ENCODE measurements at regions of chr10 and their contacts with region 1.

Region 1: DNA sequence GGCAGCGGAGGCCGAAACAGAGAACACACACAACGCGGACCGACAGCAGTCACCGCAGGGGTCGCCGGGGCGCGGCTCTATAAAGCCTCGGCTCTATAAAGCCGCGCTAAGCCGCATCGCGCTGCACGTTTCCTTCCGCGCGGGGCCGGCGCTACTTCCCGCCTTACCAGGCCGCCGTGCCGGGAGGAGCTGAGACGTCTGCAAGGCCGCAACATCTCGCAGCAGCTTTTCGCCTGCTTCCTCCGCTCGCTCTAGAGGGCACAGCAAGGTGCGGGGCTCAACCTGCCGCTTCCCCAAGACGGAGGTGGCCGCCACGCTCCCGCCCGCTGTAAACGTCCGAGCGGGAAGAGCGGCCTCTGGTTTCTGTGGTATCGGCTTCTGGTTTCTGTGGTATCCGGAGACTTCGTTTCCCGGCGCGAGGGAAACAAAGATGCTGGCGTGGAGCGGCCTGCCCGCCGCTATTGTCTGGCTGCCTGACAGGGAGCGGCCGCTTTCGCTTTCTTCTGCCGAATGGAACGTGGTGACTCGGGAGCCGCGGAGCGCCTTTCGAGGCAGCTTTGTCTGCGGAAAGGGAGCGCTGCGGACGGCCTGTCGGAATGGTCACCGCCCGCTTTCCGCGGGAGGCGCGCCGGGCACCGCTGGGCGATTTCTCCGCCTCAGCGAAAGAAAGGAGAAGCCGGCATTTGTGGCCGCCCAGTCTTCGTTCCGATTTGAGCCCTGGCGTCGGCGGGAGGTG is 91.8 kb downstream of the SPAG6 start:
- DNase-seq: peak; percentile 89 to 90 (median 89)
- H3K4me3 ChIP-seq: peak overlapping the region; percentile 82 to 87
- H3K4me3 Mint-ChIP-seq: peak overlapping the region; percentile 92 to 97 (median 96)
- H3K27ac ChIP-seq: peak overlapping the region; percentile 90
- H3K27ac Mint-ChIP-seq: peak overlapping the region; percentile 96 to 99 (median 98)
- H3K4me1 ChIP-seq: peaks cover 15% of the 10 kb centered on the region
- H3K4me1 Mint-ChIP-seq: peaks cover 24 to 53% (median 28%) of the 10 kb centered on the region in 4 donors
- H3K27me3 ChIP-seq: no peaks in the 10 kb centered on the region
- H3K27me3 Mint-ChIP-seq: no peaks in the 10 kb centered on the region

Region 2: DNA sequence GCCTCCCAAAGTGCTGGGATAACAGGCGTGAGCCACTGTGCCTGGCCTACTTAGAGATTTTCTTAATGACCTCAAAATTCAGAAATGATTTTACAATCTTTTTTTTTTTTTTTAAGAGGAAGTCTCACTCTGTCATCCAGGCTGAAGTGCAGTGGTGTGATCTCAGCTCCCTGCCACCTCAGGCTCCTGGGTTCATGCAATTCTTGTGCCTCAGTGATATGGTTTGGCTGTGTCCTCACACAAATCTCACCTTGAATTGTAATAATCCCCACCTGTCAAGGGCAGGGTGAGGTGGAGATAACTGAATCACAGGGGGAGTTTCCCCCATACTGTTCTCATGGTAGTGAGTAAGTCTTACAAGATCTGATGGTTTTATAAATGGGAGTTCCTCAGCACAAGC is 593.4 kb before region 1 on chr10:
- CTCF ChIA-PET with region 1: no interaction called
- POLR2A ChIA-PET with region 1: no interaction called
- intact Hi-C with region 1: no loop called
- DNase-seq: no peak
- H3K4me3 ChIP-seq: no peak overlapping the region
- H3K4me3 Mint-ChIP-seq: no peak overlapping the region
- H3K27ac ChIP-seq: no peak overlapping the region
- H3K27ac Mint-ChIP-seq: peak overlapping the region in 1 of 7 donors; percentile 23
- H3K4me1 ChIP-seq: no peaks in the 10 kb centered on the region
- H3K4me1 Mint-ChIP-seq: no peaks in the 10 kb centered on the region
- H3K27me3 ChIP-seq: no peaks in the 10 kb centered on the region
- H3K27me3 Mint-ChIP-seq: no peaks in the 10 kb centered on the region

Region 3: GRCh38 chr10:21989453-21990154 is 447.4 kb before region 1 on chr10:
- CTCF ChIA-PET with region 1: interaction called, 10 read pairs
- POLR2A ChIA-PET with region 1: no interaction called
- intact Hi-C with region 1: no loop called
- DNase-seq: peak in 4 of 5 donors; percentile 13 to 33 (median 24)
- H3K4me3 ChIP-seq: no peak overlapping the region
- H3K4me3 Mint-ChIP-seq: no peak overlapping the region
- H3K27ac ChIP-seq: no peak overlapping the region
- H3K27ac Mint-ChIP-seq: peak overlapping the region in 2 of 7 donors; percentile 52 to 94
- H3K4me1 ChIP-seq: peaks cover 5% of the 10 kb centered on the region
- H3K4me1 Mint-ChIP-seq: peaks cover 6 to 12% (median 10%) of the 10 kb centered on the region in 4 donors
- H3K27me3 ChIP-seq: no peaks in the 10 kb centered on the region
- H3K27me3 Mint-ChIP-seq: no peaks in the 10 kb centered on the region

Region 4: GRCh38 chr10:22158426-22158825 is 278.6 kb before region 1 on chr10:
- CTCF ChIA-PET with region 1: no interaction called
- POLR2A ChIA-PET with region 1: no interaction called
- intact Hi-C with region 1: no loop called
- DNase-seq: no peak
- H3K4me3 ChIP-seq: no peak overlapping the region
- H3K4me3 Mint-ChIP-seq: peak overlapping the region in 2 of 8 donors; percentile 4 to 11
- H3K27ac ChIP-seq: no peak overlapping the region
- H3K27ac Mint-ChIP-seq: no peak overlapping the region
- H3K4me1 ChIP-seq: peaks cover 11% of the 10 kb centered on the region
- H3K4me1 Mint-ChIP-seq: peaks cover 3 to 17% (median 10%) of the 10 kb centered on the region in 4 donors
- H3K27me3 ChIP-seq: no peaks in the 10 kb centered on the region
- H3K27me3 Mint-ChIP-seq: peaks cover 2 to 3% of the 10 kb centered on the region in 2 donors

Region 5: GRCh38 chr10:22251751-22252223 is 185.3 kb before region 1 on chr10:
- CTCF ChIA-PET with region 1: interaction called, 4 read pairs
- POLR2A ChIA-PET with region 1: interaction called, 52 read pairs
- intact Hi-C with region 1: loop called (anchors 2 kb)
- DNase-seq: peak; percentile 76 to 80 (median 78)
- H3K4me3 ChIP-seq: peak overlapping the region; percentile 70 to 97
- H3K4me3 Mint-ChIP-seq: peak overlapping the region; percentile 89 to 99 (median 96)
- H3K27ac ChIP-seq: peak overlapping the region; percentile 78
- H3K27ac Mint-ChIP-seq: peak overlapping the region; percentile 96 to 100 (median 98)
- H3K4me1 ChIP-seq: peaks cover 43% of the 10 kb centered on the region
- H3K4me1 Mint-ChIP-seq: peaks cover 12 to 58% (median 35%) of the 10 kb centered on the region in 4 donors
- H3K27me3 ChIP-seq: no peaks in the 10 kb centered on the region
- H3K27me3 Mint-ChIP-seq: peaks cover 0 to 2% of the 10 kb centered on the region in 2 donors

Region 6: GRCh38 chr10:22335173-22336123 is 101.6 kb before region 1 on chr10:
- CTCF ChIA-PET with region 1: interaction called, 3 read pairs
- POLR2A ChIA-PET with region 1: interaction called, 12 read pairs
- intact Hi-C with region 1: loop called (anchors 5 kb)
- DNase-seq: peak; percentile 80 to 88 (median 84)
- H3K4me3 ChIP-seq: peak overlapping the region; percentile 9 to 52
- H3K4me3 Mint-ChIP-seq: peak overlapping the region; percentile 84 to 96 (median 87)
- H3K27ac ChIP-seq: peak overlapping the region; percentile 58
- H3K27ac Mint-ChIP-seq: peak overlapping the region; percentile 92 to 96 (median 95)
- H3K4me1 ChIP-seq: peaks cover 59% of the 10 kb centered on the region
- H3K4me1 Mint-ChIP-seq: peaks cover 23 to 54% (median 34%) of the 10 kb centered on the region in 4 donors
- H3K27me3 ChIP-seq: peaks cover 45% of the 10 kb centered on the region
- H3K27me3 Mint-ChIP-seq: peaks cover 23 to 40% of the 10 kb centered on the region in 2 donors

Region 7: DNA sequence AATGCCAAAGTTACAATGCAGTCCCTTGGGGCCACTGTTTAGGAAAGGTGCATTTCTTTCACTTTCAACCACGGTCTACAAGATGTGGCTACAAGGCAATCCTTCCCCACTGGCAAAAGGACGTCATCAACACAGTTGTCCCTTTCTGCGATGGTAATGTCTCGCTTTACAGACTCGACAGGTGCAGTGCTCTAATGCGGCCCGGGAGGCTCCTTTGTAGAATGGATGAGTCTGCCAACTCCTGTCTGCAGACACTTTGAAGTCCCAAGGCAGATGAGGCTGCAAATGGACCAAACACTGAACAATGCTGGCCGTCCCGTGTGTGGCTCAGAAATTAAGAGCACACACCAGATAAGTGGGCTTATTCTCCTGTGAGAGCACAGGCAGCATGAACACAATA is 143.7 kb after region 1 on chr10:
- CTCF ChIA-PET with region 1: no interaction called
- POLR2A ChIA-PET with region 1: interaction called, 11 read pairs
- intact Hi-C with region 1: no loop called
- DNase-seq: no peak
- H3K4me3 ChIP-seq: no peak overlapping the region
- H3K4me3 Mint-ChIP-seq: no peak overlapping the region
- H3K27ac ChIP-seq: no peak overlapping the region
- H3K27ac Mint-ChIP-seq: peak overlapping the region in 3 of 7 donors; percentile 6 to 47 (median 41)
- H3K4me1 ChIP-seq: peaks cover 3% of the 10 kb centered on the region
- H3K4me1 Mint-ChIP-seq: peaks cover 23 to 60% (median 45%) of the 10 kb centered on the region in 4 donors
- H3K27me3 ChIP-seq: no peaks in the 10 kb centered on the region
- H3K27me3 Mint-ChIP-seq: no peaks in the 10 kb centered on the region

Region 8: GRCh38 chr10:22682237-22683139 is 245.4 kb after region 1 on chr10:
- CTCF ChIA-PET with region 1: no interaction called
- POLR2A ChIA-PET with region 1: no interaction called
- intact Hi-C with region 1: loop called (anchors 10 kb)
- DNase-seq: peak; percentile 77 to 86 (median 81)
- H3K4me3 ChIP-seq: peak overlapping the region in 1 of 2 donors; percentile 15
- H3K4me3 Mint-ChIP-seq: peak overlapping the region; percentile 65 to 92 (median 82)
- H3K27ac ChIP-seq: peak overlapping the region; percentile 81
- H3K27ac Mint-ChIP-seq: peak overlapping the region; percentile 93 to 100 (median 97)
- H3K4me1 ChIP-seq: peaks cover 100% of the 10 kb centered on the region
- H3K4me1 Mint-ChIP-seq: peaks cover 75 to 96% (median 88%) of the 10 kb centered on the region in 4 donors
- H3K27me3 ChIP-seq: no peaks in the 10 kb centered on the region
- H3K27me3 Mint-ChIP-seq: no peaks in the 10 kb centered on the region

Measured in CD4-positive, alpha-beta memory T cell (primary cell).